ENCODE measurements at regions of chr10 and their contacts with region 1.

Region 1: DNA sequence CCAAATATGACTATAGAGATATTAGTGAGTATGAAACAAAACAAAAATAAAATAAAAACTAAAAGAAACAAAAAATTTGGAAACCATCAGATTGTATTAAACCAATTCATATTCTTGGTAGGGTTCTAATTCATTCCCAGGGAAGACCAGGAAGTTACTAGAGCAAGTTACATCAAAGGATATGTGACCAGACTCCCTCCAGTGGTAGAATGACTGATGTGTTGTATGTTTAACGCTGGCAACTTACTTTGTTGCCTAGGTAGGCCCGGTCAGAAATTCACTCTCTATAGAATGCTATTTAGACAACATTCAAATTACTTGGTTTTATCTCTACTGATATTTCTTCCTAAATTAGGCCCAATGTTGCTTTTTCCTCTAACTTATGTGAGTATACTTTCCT is 5.2 kb downstream of the PHYHIPL start:
- DNase-seq: no peak
- ATAC-seq: peak; percentile 57 to 73
- H3K4me3 ChIP-seq: no peak overlapping the region
- H3K27ac ChIP-seq: no peak overlapping the region
- H3K4me1 ChIP-seq: peaks cover 3% of the 10 kb centered on the region
- H3K27me3 ChIP-seq: no peaks in the 10 kb centered on the region

Region 2: DNA sequence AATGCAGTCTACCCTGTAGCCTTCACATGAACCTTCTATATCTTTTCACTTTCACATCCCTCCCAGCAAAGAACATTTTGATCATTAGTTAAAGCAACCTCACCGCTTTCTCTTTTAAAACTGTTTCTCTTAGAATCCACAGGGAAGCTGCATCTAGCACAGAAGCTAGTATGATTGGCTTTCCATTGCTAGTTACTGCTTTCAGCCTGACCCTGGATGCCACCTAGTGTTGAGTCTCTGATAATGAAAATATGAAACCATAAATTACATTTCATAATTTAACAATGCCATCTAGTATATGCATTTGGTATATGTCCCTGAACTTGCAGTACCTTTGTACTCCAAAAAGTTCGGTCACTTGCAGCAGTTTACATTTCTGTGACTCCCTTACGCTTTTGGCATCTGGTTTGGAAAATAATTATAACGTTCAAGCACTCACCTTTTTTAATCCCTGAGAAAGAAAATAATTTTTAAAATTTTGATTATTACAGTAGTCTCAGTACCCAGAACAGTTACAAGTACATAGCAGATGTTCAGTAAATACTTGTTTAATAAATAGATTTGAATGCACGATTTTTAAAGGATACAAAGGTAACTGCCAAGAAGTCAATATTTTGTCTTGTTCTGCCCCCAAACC is 890.0 kb before region 1 on chr10:
- intact Hi-C with region 1: no loop called
- DNase-seq: no peak
- ATAC-seq: peak; percentile 43 to 74
- H3K4me3 ChIP-seq: no peak overlapping the region
- H3K27ac ChIP-seq: no peak overlapping the region
- H3K4me1 ChIP-seq: no peaks in the 10 kb centered on the region
- H3K27me3 ChIP-seq: no peaks in the 10 kb centered on the region

Region 3: GRCh38 chr10:58952747-58953466 is 228.8 kb before region 1 on chr10:
- intact Hi-C with region 1: loop called (anchors 5 to 10 kb)
- DNase-seq: peak in 1 of 3 donors; percentile 16
- ATAC-seq: peak; percentile 75 to 85
- H3K4me3 ChIP-seq: no peak overlapping the region
- H3K27ac ChIP-seq: peak overlapping the region; percentile 72
- H3K4me1 ChIP-seq: no peaks in the 10 kb centered on the region
- H3K27me3 ChIP-seq: no peaks in the 10 kb centered on the region

Region 4: GRCh38 chr10:59606551-59606961 is 424.9 kb after region 1 on chr10:
- intact Hi-C with region 1: no loop called
- DNase-seq: no peak
- ATAC-seq: no peak
- H3K4me3 ChIP-seq: no peak overlapping the region
- H3K27ac ChIP-seq: no peak overlapping the region
- H3K4me1 ChIP-seq: peaks cover 2% of the 10 kb centered on the region
- H3K27me3 ChIP-seq: no peaks in the 10 kb centered on the region

Measured in right cardiac atrium (tissue), 5 donors.